ENCODE measurements at regions of chr10 and their contacts with region 1.

Region 1: GRCh38 chr10:113385021-113385999 is 167.5 kb upstream of the HABP2 start:
- DNase-seq: peak; percentile 83
- H3K4me3 ChIP-seq: no peak overlapping the region
- H3K27ac ChIP-seq: no peak overlapping the region
- H3K4me1 ChIP-seq: peaks cover 28% of the 10 kb centered on the region
- H3K27me3 ChIP-seq: peaks cover 1 to 5% of the 10 kb centered on the region in 2 experiments
- CTCF ChIP-seq: peak; percentile 78 to 90
- POLR2A ChIP-seq: no peak

Region 2: DNA sequence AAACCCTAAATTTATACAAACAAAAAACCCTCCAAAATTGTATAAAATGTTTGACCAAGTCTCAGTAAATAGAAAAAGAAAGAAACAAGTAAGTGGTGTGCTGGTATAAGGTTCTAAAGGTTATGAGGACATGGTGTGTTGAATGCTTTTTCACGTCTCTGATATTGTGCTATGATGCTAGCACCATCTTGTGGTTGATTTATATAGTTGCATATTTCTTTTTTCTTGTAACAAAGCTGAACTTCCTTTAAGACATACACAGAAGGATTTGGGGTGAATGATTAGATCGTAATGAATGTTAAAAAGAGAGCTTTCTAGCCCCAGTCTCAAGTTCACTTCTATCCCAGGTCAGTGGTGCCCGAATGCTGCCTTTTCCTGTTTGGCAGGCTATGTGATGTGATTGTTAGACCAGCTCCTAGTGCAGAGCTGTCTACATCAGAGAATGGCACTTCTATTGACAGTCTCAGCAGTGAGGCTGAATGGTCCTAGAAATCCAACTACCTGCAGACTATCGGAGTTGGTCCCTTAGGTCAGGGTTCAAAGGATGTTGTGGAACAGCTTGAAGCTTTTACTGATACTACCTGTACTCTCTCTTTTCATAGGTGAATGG is 913.3 kb before region 1 on chr10:
- CTCF ChIA-PET with region 1: interaction called, 43 read pairs
- POLR2A ChIA-PET with region 1: no interaction called
- dilution Hi-C with region 1: no loop called
- intact Hi-C with region 1: loop called (anchors 1 kb)
- DNase-seq: peak; percentile 66
- H3K4me3 ChIP-seq: no peak overlapping the region
- H3K27ac ChIP-seq: no peak overlapping the region
- H3K4me1 ChIP-seq: no peaks in the 10 kb centered on the region
- H3K27me3 ChIP-seq: no peaks in the 10 kb centered on the region
- CTCF ChIP-seq: peak; percentile 44 to 45
- POLR2A ChIP-seq: no peak

Region 3: DNA sequence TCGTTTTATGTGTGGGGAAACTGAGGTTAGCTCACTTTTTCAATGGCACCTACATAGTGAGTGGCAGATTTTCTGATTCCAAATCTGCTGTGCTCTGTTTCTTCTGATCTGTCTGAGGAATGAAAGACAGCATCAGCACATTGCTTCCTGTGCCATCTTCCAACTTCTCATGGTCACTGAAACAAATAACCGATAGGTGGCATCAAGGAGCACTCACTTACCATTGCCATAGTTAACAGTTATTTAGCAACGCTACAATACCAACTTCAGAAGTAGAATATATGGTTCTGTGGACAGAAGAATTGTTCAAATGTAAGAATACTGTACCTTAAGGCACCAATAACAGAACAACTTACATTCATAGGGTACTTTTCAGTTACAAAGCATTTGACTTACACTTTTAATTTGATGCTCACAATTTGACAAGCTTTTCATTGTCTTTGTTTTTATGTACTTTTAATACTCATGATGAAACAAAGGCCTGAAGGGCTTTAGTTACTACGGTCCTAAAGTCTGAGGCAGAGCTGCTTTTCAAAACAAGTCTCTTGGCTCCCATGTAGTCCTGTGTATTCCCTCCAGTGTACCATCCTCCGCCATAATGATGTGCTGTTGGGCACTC is 664.1 kb before region 1 on chr10:
- CTCF ChIA-PET with region 1: interaction called, 25 read pairs
- POLR2A ChIA-PET with region 1: no interaction called
- dilution Hi-C with region 1: no loop called
- intact Hi-C with region 1: loop called (anchors 1 kb)
- DNase-seq: peak; percentile 54
- H3K4me3 ChIP-seq: no peak overlapping the region
- H3K27ac ChIP-seq: no peak overlapping the region
- H3K4me1 ChIP-seq: no peaks in the 10 kb centered on the region
- H3K27me3 ChIP-seq: no peaks in the 10 kb centered on the region
- CTCF ChIP-seq: peak; percentile 56 to 57
- POLR2A ChIP-seq: no peak

Region 4: GRCh38 chr10:112949875-112950507 is 435.3 kb before region 1 on chr10 and contains the start of gene TCF7L2:
- CTCF ChIA-PET with region 1: interaction called, 3 read pairs
- POLR2A ChIA-PET with region 1: no interaction called
- dilution Hi-C with region 1: no loop called
- intact Hi-C with region 1: loop called (anchors 2 kb)
- DNase-seq: peak; percentile 97
- H3K4me3 ChIP-seq: peak within 1 kb of the TSS; percentile 73 to 100 (median 98)
- H3K27ac ChIP-seq: peak within 1 kb of the TSS; percentile 91
- H3K4me1 ChIP-seq: peaks cover 26% of the 10 kb centered on the region
- H3K27me3 ChIP-seq: no peaks in the 10 kb centered on the region
- CTCF ChIP-seq: peak in 1 of 2 donors; percentile 6
- POLR2A ChIP-seq: no peak
- total RNA-seq, gene TCF7L2: 21.8 and 22.1 TPM in 2 replicates

Region 5: GRCh38 chr10:113126229-113127201 is 258.8 kb before region 1 on chr10:
- CTCF ChIA-PET with region 1: interaction called, 21 read pairs
- POLR2A ChIA-PET with region 1: no interaction called
- dilution Hi-C with region 1: no loop called
- intact Hi-C with region 1: loop called (anchors 1 kb)
- DNase-seq: peak; percentile 76
- H3K4me3 ChIP-seq: peak overlapping the region in 1 of 3 experiments; percentile 44
- H3K27ac ChIP-seq: no peak overlapping the region
- H3K4me1 ChIP-seq: peaks cover 4% of the 10 kb centered on the region
- H3K27me3 ChIP-seq: no peaks in the 10 kb centered on the region
- CTCF ChIP-seq: peak; percentile 56 to 77
- POLR2A ChIP-seq: no peak

Region 6: DNA sequence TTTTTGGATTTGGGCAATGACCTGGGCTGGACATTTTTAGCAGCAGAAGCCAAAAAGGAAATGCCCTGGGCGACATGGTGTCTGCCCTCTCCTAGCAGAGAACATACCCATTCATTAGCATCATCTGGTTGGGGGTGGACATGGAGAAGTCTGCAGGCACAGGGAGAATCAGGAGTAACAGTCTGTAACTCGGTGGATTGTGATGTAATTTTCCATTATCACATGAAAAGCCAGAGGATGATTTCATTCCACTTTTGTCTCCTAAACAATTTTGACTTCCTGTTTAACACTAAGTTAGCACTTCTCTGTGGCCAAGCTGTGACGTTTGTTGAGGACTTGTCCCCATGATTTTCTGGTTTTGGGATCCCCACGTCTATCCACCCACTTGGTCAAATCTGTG is 13.8 kb after region 1 on chr10:
- CTCF ChIA-PET with region 1: interaction called, 10 read pairs
- POLR2A ChIA-PET with region 1: no interaction called
- dilution Hi-C with region 1: no loop called
- intact Hi-C with region 1: no loop called
- DNase-seq: no peak
- H3K4me3 ChIP-seq: no peak overlapping the region
- H3K27ac ChIP-seq: no peak overlapping the region
- H3K4me1 ChIP-seq: no peaks in the 10 kb centered on the region
- H3K27me3 ChIP-seq: peaks cover 0 to 2% of the 10 kb centered on the region in 2 experiments
- CTCF ChIP-seq: no peak
- POLR2A ChIP-seq: no peak

Measured in endothelial cell of umbilical vein (primary cell).